ENCODE measurements at regions of chr6 and their contacts with region 1.

Region 1: GRCh38 chr6:27809939-27810767 is 102.0 kb downstream of the OR2B2 start:
- DNase-seq: peak; percentile 83
- H3K4me3 Mint-ChIP-seq: peak overlapping the region; percentile 84
- H3K27ac Mint-ChIP-seq: peak overlapping the region; percentile 92
- H3K4me1 Mint-ChIP-seq: peaks cover 72% of the 10 kb centered on the region
- H3K27me3 Mint-ChIP-seq: no peaks in the 10 kb centered on the region

Region 2: GRCh38 chr6:26031595-26032339 is 1778.4 kb before region 1 on chr6:
- intact Hi-C with region 1: loop called (anchors 5 kb)
- DNase-seq: peak; percentile 90
- H3K4me3 Mint-ChIP-seq: peak overlapping the region; percentile 92
- H3K27ac Mint-ChIP-seq: peak overlapping the region; percentile 98
- H3K4me1 Mint-ChIP-seq: peaks cover 72% of the 10 kb centered on the region
- H3K27me3 Mint-ChIP-seq: no peaks in the 10 kb centered on the region

Region 3: DNA sequence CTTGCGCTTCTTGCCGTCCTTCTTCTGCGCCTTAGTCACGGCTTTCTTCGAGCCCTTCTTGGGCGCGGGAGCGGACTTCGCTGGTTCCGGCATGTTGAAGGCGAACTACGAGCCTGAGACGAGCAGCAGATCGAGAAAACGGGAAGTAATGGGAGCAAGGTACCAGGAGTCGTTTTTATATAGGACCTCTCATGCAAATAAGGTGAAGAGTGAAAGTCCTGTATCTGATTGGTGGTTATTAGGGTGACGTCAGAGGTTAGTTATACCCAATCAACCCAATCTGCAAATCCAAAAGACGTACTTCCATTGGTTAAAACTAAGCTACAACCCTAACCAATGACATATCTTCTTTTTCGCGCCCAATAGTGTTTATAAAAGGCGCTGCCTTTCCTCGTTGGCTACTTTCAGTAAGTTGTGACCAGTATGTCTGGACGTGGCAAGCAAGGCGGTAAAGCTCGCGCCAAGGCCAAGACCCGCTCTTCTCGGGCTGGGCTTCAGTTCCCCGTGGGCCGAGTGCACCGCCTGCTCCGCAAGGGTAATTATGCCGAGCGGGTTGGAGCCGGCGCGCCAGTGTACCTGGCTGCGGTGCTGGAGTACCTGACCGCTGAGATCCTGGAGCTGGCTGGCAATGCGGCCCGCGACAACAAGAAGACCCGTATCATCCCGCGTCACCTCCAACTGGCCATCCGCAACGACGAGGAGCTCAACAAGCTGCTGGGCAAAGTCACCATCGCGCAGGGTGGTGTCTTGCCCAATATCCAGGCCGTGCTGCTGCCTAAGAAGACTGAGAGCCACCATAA is 663.2 kb before region 1 on chr6:
- intact Hi-C with region 1: loop called (anchors 2 kb)
- DNase-seq: peak; percentile 84
- H3K4me3 Mint-ChIP-seq: no peak overlapping the region
- H3K27ac Mint-ChIP-seq: no peak overlapping the region
- H3K4me1 Mint-ChIP-seq: peaks cover 12% of the 10 kb centered on the region
- H3K27me3 Mint-ChIP-seq: no peaks in the 10 kb centered on the region

Region 4: GRCh38 chr6:27795697-27796494 is 14.3 kb before region 1 on chr6:
- intact Hi-C with region 1: loop called (anchors 1 kb)
- DNase-seq: peak; percentile 48
- H3K4me3 Mint-ChIP-seq: no peak overlapping the region
- H3K27ac Mint-ChIP-seq: peak overlapping the region; percentile 8
- H3K4me1 Mint-ChIP-seq: peaks cover 47% of the 10 kb centered on the region
- H3K27me3 Mint-ChIP-seq: peaks cover 8% of the 10 kb centered on the region

Region 5: DNA sequence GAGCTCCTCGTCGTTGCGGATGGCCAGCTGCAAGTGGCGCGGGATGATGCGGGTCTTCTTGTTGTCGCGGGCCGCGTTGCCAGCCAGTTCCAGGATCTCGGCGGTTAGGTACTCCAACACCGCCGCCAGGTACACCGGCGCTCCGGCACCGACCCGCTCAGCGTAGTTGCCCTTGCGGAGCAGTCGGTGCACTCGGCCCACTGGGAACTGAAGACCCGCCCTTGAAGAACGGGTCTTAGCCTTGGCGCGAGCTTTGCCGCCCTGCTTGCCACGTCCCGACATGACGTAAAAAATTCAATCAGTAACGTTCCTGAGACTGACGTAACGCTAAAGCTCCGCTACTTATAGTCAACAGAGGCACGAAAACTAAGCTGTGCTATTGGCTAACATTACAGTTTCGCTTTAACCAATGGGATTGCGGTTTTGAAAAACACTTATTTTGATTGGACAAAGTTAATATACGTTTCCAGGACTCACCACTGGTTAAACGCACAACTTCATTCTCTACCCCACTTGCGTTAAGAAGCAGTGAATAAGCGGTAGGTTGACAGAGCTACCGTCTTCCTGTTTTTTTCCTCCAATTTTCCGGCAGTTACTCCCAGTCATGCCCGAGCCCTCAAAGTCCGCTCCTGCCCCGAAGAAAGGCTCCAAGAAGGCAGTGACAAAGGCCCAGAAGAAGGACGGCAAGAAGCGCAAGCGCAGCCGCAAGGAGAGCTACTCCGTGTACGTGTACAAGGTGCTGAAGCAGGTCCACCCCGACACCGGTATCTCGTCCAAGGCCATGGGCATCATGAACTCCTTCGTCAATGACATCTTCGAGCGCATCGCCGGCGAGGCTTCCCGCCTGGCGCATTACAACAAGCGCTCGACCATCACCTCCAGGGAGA is 28.1 kb after region 1 on chr6:
- intact Hi-C with region 1: loop called (anchors 1 kb)
- DNase-seq: peak; percentile 85
- H3K4me3 Mint-ChIP-seq: no peak overlapping the region
- H3K27ac Mint-ChIP-seq: no peak overlapping the region
- H3K4me1 Mint-ChIP-seq: peaks cover 28% of the 10 kb centered on the region
- H3K27me3 Mint-ChIP-seq: no peaks in the 10 kb centered on the region

Region 6: GRCh38 chr6:27871924-27872638 is 61.9 kb after region 1 on chr6:
- intact Hi-C with region 1: loop called (anchors 1 kb)
- DNase-seq: peak; percentile 85
- H3K4me3 Mint-ChIP-seq: peak overlapping the region; percentile 89
- H3K27ac Mint-ChIP-seq: peak overlapping the region; percentile 97
- H3K4me1 Mint-ChIP-seq: peaks cover 50% of the 10 kb centered on the region
- H3K27me3 Mint-ChIP-seq: no peaks in the 10 kb centered on the region